HEK293T (cell line): ENCODE measurements at regions of chr3 and their contacts with region 1.

Region 1: DNA sequence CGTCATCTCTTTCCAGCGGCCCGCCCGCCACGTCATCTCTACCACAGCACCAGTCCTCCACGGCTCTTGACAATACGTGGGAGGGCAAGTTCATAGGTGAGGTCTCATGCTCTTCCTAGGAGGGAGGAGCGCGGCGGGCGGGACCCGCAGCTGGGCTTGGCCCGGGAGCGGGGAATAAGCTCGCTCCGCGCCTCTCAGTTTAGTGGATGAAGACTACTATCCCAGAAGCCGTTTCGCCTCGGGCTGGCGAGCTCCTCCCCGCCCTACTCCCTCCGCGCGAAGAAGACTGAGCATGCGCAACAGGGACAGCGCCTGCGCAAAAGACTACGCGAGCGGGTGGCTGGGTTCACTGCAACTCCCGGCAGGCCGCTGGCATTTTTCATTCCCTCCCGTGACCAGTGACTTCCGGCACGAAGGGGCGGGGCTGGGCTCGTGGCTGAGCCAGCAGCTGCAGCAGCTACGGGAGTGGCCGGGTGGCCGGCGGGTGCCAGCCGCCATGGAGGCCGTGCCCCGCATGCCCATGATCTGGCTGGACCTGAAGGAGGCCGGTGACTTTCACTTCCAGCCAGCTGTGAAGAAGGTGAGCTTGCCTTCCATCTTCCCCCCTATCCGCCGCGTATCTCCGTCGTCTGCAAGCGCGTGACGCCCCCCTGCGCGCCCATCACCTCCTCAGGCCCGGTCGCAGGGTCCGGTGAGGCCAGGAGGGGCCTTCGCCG is at the start of gene PTPN23:
- DNase-seq: peak; percentile 99

Region 2: DNA sequence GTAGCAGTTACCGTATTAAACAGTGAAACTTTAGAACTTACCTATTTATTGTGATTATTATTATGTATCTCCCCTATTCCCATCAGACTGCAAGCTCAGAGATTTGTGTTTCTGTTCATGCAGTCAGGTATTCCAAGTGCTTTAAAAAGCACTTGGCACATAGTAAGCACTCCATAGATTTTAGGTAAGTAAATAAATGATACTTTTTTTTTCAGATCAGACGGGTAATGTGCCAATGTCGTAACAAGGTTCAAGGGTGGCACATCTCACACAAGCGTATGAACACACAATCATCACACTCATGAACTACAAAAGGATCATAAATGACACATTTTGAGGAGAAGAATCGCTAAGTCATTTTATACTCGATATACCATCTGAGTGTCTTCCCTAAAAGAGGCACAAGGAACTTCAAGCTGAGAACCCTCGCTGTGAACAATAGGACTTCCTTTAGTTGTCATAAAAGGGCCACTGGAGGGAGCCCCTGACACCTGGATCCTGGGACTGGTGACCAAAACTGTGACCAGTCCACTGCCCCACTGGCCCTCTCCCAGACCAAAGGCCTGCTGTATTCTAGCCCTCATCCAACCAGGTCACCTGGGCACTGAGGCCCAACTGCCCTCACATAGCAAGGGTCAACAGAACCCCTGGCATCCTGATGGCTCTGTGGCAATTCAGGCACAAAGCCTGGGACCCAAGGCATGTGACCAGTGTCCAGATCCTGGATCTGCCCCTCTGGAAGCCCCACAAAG is 130.3 kb before region 1 on chr3:
- CTCF ChIA-PET with region 1: no interaction called
- POLR2A ChIA-PET with region 1: no interaction called
- DNase-seq: peak; percentile 45

Region 3: GRCh38 chr3:47362701-47363100 is 18.1 kb before region 1 on chr3:
- CTCF ChIA-PET with region 1: no interaction called
- POLR2A ChIA-PET with region 1: interaction called, 11 read pairs
- DNase-seq: no peak

Region 4: DNA sequence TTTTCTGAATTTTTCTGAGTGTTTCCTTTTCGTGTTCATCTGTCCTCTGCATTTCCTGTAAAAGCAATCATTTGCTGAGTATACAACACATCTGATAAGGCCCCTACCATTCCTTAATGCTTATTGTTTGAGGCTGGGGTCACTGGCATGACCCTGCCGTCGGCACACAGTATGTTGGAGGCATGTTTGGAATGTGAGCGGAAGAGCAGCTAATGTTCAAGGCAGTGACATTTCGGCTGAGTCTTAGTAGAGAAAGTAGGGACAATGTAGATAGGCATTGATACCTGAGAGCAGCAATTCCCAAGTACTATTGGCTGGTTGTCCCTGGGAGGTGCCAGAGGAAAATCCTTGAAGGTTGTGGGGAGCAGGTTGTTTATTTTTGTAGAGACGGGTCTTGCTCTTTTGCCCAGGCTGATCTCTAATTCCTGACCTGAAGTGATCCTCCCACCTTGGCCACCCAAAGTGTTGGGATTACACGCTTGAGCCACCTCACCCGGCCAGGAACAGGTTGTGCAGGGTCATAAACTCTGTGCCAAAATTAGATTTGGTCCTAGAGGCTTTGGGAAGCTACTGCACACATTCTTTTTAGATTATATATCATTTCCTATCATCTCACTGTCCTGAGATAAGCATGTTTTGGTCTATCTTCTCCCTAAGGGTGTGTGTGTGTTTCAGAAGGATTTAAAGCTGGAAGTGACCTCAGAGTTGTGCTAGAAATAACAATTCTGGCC is 13.5 kb after region 1 on chr3:
- CTCF ChIA-PET with region 1: no interaction called
- POLR2A ChIA-PET with region 1: interaction called, 18 read pairs
- DNase-seq: no peak

Region 5: GRCh38 chr3:47455806-47456452 is 75.2 kb after region 1 on chr3:
- CTCF ChIA-PET with region 1: no interaction called
- POLR2A ChIA-PET with region 1: no interaction called
- DNase-seq: no peak